Caco-2 (cell line): ENCODE measurements at regions of chr6 and their contacts with region 1.

Region 1: GRCh38 chr6:105374010-105374420 is 28.9 kb downstream of the PREP start:
- DNase-seq: peak; percentile 85 to 88
- H3K4me3 ChIP-seq: no peak overlapping the region
- H3K4me3 Mint-ChIP-seq: no peak overlapping the region
- H3K27ac Mint-ChIP-seq: peak overlapping the region; percentile 82
- H3K4me1 ChIP-seq: peaks cover 44% of the 10 kb centered on the region
- H3K4me1 Mint-ChIP-seq: peaks cover 26% of the 10 kb centered on the region
- H3K27me3 ChIP-seq: no peaks in the 10 kb centered on the region
- H3K27me3 Mint-ChIP-seq: no peaks in the 10 kb centered on the region
- CTCF ChIP-seq: no peak

Region 2: DNA sequence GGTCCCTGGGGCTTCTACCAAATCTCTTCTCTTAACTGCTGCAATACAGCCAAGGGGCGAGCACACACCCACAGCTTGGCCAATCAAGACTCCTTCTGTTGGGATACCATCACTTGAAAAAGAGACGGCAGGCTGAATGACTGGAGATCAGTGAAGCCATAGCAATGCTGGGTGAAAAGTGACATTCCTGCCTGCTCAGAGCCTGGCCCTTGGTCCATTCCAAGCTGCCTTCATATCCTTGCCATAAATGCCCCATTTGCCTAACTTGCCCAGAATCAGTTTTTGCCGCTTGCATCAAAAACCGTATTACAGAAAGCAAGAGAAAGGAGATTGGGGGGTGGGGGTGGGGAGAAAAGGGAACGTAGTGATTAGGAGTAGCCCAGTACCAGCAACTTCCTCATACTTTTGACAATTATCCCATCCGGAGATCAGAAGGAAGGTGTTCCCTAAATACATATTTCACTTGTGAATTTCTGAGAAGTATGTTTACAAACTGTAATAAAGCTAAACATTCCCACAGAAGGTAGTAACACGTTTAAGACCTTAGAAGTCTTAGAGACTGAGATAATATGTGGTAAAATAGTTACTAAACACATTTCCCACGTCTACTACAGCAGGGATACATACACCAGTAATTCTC is 14.3 kb after region 1 on chr6:
- CTCF ChIA-PET with region 1: no interaction called
- POLR2A ChIA-PET with region 1: interaction called, 7 read pairs
- intact Hi-C with region 1: loop called (anchors 1 kb)
- DNase-seq: peak in 1 of 2 experiments; percentile 34
- H3K4me3 ChIP-seq: no peak overlapping the region
- H3K4me3 Mint-ChIP-seq: no peak overlapping the region
- H3K27ac Mint-ChIP-seq: peak overlapping the region; percentile 82
- H3K4me1 ChIP-seq: peaks cover 59% of the 10 kb centered on the region
- H3K4me1 Mint-ChIP-seq: peaks cover 26% of the 10 kb centered on the region
- H3K27me3 ChIP-seq: no peaks in the 10 kb centered on the region
- H3K27me3 Mint-ChIP-seq: no peaks in the 10 kb centered on the region
- CTCF ChIP-seq: no peak